ENCODE measurements at regions of chr2 and their contacts with region 1.

Region 1: DNA sequence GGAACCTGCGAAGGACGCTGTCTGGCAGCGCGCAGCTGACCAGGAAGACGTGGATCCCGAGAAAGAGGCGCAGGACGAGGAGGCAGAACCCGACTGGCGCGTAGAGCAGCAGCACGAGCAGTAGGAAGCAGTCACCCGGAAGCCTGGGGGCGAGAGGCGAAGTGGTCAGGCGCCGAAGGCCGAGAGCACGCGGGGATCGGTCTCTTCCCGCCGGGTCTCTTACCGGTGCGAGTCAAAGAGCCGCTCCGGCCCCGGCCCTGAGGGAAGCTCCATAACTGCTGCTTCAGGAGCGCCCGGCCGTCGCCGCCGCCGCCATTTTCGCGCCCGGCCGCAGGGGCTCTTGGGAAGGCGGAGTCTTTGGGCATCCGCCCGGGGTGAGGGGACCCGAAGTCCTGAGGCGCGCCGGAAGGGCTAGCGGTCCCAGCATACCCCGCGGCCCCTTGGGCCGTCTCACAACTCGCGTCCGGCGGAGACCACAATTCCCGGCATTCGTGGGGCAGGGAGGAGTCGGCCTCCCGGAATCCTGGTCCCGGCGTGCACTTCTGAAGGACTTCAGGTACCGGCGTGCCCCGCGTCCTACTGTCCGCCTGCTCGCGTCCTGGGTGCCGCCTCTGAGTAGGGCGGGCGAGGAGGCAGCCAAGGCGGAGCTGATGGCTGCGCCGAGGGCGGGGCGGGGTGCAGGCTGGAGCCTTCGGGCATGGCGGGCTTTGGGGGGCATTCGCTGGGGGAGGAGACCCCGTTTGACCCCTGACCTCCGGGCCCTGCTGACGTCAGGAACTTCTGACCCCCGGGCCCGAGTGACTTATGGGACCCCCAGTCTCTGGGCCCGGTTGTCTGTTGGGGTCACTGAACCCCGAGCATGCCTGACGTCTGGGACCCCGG is at the starts of genes AUP1 and HTRA2:
- DNase-seq: peak; percentile 99
- ATAC-seq: peak; percentile 96 to 98 (median 96)
- H3K4me3 ChIP-seq: peak within 1 kb of the TSS; percentile 66 to 99 (median 84)
- H3K27ac ChIP-seq: peak within 1 kb of the TSS; percentile 78 to 95 (median 90)
- H3K4me1 ChIP-seq: peaks cover 5 to 36% (median 26%) of the 10 kb centered on the region in 12 donors
- H3K27me3 ChIP-seq: no peaks in the 10 kb centered on the region
- CTCF ChIP-seq: no peak
- POLR2A ChIP-seq: peak in 1 of 2 donors; percentile 78
- total RNA-seq, gene AUP1: 33.6 to 74.5 (median 49.8) TPM
- total RNA-seq, gene HTRA2: 23.6 to 32.0 (median 24.8) TPM

Region 2: GRCh38 chr2:74482801-74483674 is 46.6 kb before region 1 on chr2 and contains the starts of genes CCDC142 and TTC31:
- intact Hi-C with region 1: loop called in 6 of 10 experiments (anchors 1 to 5 kb)
- DNase-seq: peak; percentile 96 to 97 (median 97)
- ATAC-seq: peak; percentile 98 to 99 (median 98)
- H3K4me3 ChIP-seq: peak within 1 kb of the TSS; percentile 71 to 98 (median 88)
- H3K27ac ChIP-seq: peak within 1 kb of the TSS; percentile 73 to 97 (median 92)
- H3K4me1 ChIP-seq: peaks cover 5 to 31% (median 25%) of the 10 kb centered on the region in 12 donors
- H3K27me3 ChIP-seq: no peaks in the 10 kb centered on the region
- CTCF ChIP-seq: peak; percentile 77 to 97 (median 88)
- POLR2A ChIP-seq: peak in 1 of 2 donors; percentile 37
- total RNA-seq, gene CCDC142: 4.4 to 13.4 (median 7.1) TPM
- total RNA-seq, gene TTC31: 7.1 to 14.2 (median 10.0) TPM

Region 3: GRCh38 chr2:74488644-74489481 is 40.7 kb before region 1 on chr2:
- intact Hi-C with region 1: loop called in 2 of 10 experiments (anchors 5 kb)
- DNase-seq: no peak
- ATAC-seq: no peak
- H3K4me3 ChIP-seq: no peak overlapping the region
- H3K27ac ChIP-seq: no peak overlapping the region
- H3K4me1 ChIP-seq: peaks cover 0 to 7% (median 3%) of the 10 kb centered on the region in 12 donors
- H3K27me3 ChIP-seq: no peaks in the 10 kb centered on the region
- CTCF ChIP-seq: no peak
- POLR2A ChIP-seq: no peak

Region 4: GRCh38 chr2:74507145-74507925 is 22.3 kb before region 1 on chr2 and contains the start of gene PCGF1:
- intact Hi-C with region 1: loop called in 3 of 10 experiments (anchors 1 to 2 kb)
- DNase-seq: peak; percentile 99 to 100 (median 99)
- ATAC-seq: peak; percentile 95 to 97 (median 96)
- H3K4me3 ChIP-seq: peak within 1 kb of the TSS; percentile 41 to 92 (median 78)
- H3K27ac ChIP-seq: peak within 1 kb of the TSS; percentile 95 to 100 (median 98)
- H3K4me1 ChIP-seq: peaks cover 4 to 55% (median 35%) of the 10 kb centered on the region in 12 donors
- H3K27me3 ChIP-seq: peaks cover 9 to 53% (median 23%) of the 10 kb centered on the region in 9 donors
- CTCF ChIP-seq: peak; percentile 21 to 64 (median 42)
- POLR2A ChIP-seq: peak in 1 of 2 donors; percentile 55
- total RNA-seq, gene PCGF1: 10.6 to 22.3 (median 16.5) TPM

Region 5: DNA sequence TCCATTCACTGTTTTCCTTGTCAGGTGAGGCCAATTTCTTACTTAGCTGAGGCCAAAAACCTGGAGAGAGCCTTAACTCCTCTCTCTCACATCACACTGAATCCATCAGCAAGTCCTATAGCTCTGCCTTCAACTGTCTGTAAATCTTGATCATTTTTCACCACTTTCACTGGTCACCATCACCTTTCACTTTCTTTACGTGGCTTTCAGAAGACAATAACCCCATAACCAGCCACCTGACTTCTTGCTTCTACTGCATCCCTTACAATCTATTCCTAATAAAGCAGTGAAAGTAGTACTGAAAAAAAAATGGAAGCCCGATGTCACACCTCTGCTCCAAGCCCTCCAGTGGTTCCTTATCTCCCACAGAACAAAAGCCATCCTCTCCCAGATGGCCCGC is 16.4 kb after region 1 on chr2:
- intact Hi-C with region 1: loop called in 2 of 10 experiments (anchors 2 kb)
- DNase-seq: no peak
- ATAC-seq: no peak
- H3K4me3 ChIP-seq: no peak overlapping the region
- H3K27ac ChIP-seq: no peak overlapping the region
- H3K4me1 ChIP-seq: peaks cover 0 to 21% (median 17%) of the 10 kb centered on the region in 12 donors
- H3K27me3 ChIP-seq: peaks cover 0 to 4% (median 0%) of the 10 kb centered on the region in 9 donors
- CTCF ChIP-seq: no peak
- POLR2A ChIP-seq: no peak

Region 6: DNA sequence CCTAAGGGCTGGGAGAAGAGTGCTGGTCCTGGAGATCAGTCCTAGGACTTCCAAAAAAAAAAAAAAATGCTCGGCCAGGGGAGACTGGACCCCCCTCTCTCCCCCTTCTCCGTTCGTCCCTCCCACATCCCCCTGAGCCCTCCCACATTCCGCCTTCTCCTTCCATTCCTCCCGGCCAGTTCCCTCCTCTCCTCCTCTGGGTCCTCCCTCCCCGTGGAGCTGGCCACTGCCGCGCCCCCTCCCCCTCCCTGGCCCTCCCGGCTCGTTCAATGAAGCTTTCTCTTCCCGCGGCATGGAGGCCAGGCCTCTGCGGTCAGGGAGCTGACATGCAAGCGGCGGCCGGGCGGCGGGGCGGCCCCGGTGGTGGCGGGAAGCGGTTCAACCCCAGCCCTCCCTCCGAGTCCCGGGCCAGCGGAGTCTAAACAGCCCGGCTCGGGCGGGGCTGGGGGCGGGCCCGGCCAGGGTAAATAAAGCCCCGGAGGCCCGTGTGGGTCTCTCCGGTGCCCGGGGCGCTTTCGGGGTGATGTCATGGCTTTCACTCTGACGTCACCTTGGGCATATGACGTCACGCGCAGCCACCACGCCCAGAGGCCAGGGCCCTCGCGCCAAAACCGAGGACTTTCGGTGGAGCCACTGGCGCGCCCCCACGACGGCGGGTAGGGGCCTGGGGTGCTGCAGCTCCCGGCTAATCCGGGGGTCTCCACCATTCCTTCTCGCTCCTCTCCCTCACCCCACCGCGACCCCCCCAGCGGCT is 24.5 kb after region 1 on chr2 and contains the start of gene LOXL3:
- intact Hi-C with region 1: loop called in 2 of 10 experiments (anchors 1 to 2 kb)
- DNase-seq: peak; percentile 84 to 88 (median 85)
- ATAC-seq: peak; percentile 47 to 82 (median 80)
- H3K4me3 ChIP-seq: peak within 1 kb of the TSS; percentile 57 to 87 (median 72)
- H3K27ac ChIP-seq: peak within 1 kb of the TSS; percentile 51 to 95 (median 86)
- H3K4me1 ChIP-seq: peaks cover 0 to 39% (median 20%) of the 10 kb centered on the region in 12 donors
- H3K27me3 ChIP-seq: peaks cover 0 to 7% (median 0%) of the 10 kb centered on the region in 9 donors
- CTCF ChIP-seq: no peak
- POLR2A ChIP-seq: peak in 1 of 2 donors; percentile 15
- total RNA-seq, gene LOXL3: 1.6 to 8.7 (median 3.0) TPM

Region 7: DNA sequence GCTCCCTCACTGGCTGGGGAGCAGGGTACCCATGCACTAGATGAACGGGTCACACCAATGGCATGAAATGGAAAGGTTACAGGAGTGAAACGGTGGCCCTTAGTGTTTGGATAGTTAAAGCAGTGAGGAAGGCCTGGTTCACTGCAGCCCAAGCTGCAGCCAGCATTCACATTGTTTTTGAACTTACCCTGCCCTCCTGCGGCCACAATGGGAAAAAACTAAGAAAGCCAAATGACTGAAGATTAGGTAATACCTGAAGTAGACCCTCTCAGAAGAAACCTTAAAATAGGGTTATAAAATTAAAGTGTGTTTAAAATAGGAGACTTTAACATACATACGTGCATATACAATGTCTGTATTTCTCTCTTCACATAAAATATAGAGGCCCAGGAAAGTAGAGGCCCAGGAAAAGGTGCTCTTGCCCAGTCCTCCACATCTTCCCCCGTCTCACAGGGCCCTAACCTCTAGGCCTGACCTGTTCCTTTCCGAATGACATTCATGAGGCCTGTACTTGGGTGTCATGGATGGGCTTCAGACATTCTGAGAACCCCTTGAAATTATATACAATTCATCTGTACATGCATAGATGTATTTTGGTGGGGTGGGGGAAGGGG is 58.2 kb after region 1 on chr2:
- intact Hi-C with region 1: loop called in 5 of 10 experiments (anchors 5 to 10 kb)
- DNase-seq: peak; percentile 48 to 62 (median 60)
- ATAC-seq: peak; percentile 71 to 92 (median 92)
- H3K4me3 ChIP-seq: no peak overlapping the region
- H3K27ac ChIP-seq: no peak overlapping the region
- H3K4me1 ChIP-seq: peaks cover 0 to 37% (median 0%) of the 10 kb centered on the region in 12 donors
- H3K27me3 ChIP-seq: peaks cover 0 to 34% (median 8%) of the 10 kb centered on the region in 9 donors
- CTCF ChIP-seq: peak; percentile 48 to 85 (median 74)
- POLR2A ChIP-seq: no peak